A549 (cell line): ENCODE measurements at regions of chr17 and their contacts with region 1.

Region 1: DNA sequence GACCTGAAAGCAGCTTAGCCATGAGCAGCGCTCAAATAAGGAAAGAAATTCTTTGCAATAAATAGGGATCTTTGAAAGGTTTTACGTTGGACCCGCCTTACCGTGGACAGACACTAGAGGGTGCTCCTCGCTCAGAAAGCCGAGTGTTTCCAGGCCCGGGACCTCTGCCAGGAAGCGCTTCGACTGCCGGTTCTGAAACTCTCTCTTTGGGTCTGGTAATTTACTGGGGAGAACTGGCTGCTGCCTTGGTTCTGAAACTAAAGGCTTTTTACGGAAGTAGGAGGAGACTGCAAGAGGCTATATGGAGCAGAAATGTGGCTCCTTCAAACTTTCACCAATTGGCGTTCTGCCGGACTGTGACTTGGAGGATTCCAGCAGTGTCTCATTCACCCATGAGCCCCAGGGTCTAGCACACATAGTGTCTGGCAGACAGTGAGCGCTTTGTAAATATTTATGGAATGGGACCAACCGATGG is 45.6 kb upstream of the HOXB9 start:
- DNase-seq: peak; percentile 72 to 79
- ATAC-seq: peak; percentile 81 to 86
- H3K4me3 ChIP-seq: peak overlapping the region; percentile 10; the same call in 2 of the 3 replicates
- H3K27ac ChIP-seq: peak overlapping the region; percentile 29 to 69
- H3K4me1 ChIP-seq: peaks cover 3% of the 10 kb centered on the region; the same call in 1 of the 3 replicates
- CTCF ChIP-seq: peak; percentile 91
- EP300 ChIP-seq: no peak
- POLR2A ChIP-seq: no peak
- RAD21 ChIP-seq: peak; percentile 90 to 93

Region 2: GRCh38 chr17:48567209-48567608 is 104.5 kb before region 1 on chr17:
- CTCF ChIA-PET with region 1: no interaction called
- POLR2A ChIA-PET with region 1: no interaction called
- DNase-seq: no peak
- ATAC-seq: no peak
- H3K4me3 ChIP-seq: no peak overlapping the region
- H3K27ac ChIP-seq: no peak overlapping the region
- H3K4me1 ChIP-seq: peaks cover 7% of the 10 kb centered on the region; the same call in 1 of the 3 replicates
- CTCF ChIP-seq: no peak
- EP300 ChIP-seq: no peak
- POLR2A ChIP-seq: no peak
- RAD21 ChIP-seq: no peak

Region 3: DNA sequence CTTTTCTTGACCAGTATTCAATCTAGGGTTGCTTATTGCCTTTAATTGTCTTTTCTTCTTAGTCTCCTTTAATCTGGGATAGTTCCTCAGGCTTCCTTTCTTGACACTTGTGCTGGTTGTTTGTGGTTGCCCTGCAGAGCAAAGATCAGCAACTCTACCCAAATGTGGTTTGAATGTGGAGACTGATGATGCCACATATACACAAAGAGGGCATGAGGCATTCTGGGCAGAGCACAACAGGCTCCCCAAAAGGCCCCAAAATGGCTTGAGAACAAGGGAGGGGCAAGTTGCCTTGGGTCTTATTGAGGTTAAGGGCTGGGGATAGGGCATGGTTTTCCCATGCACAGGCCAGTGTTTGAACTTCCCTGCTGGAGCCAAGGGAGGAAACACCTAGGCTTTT is 15.8 kb before region 1 on chr17:
- CTCF ChIA-PET with region 1: interaction called, 46 read pairs
- POLR2A ChIA-PET with region 1: no interaction called
- DNase-seq: no peak
- ATAC-seq: no peak
- H3K4me3 ChIP-seq: no peak overlapping the region
- H3K27ac ChIP-seq: no peak overlapping the region
- H3K4me1 ChIP-seq: no peaks in the 10 kb centered on the region
- CTCF ChIP-seq: no peak
- EP300 ChIP-seq: no peak
- POLR2A ChIP-seq: no peak
- RAD21 ChIP-seq: no peak

Region 4: GRCh38 chr17:48711102-48711501 is 39.4 kb after region 1 on chr17:
- CTCF ChIA-PET with region 1: interaction called, 70 read pairs
- POLR2A ChIA-PET with region 1: no interaction called
- DNase-seq: no peak
- ATAC-seq: peak in 1 of 2 experiments; percentile 39; a peak in 2 of 6 replicates
- H3K4me3 ChIP-seq: no peak overlapping the region
- H3K27ac ChIP-seq: no peak overlapping the region
- H3K4me1 ChIP-seq: peaks cover 13% of the 10 kb centered on the region; the same call in 2 of the 3 replicates
- CTCF ChIP-seq: no peak
- EP300 ChIP-seq: no peak
- POLR2A ChIP-seq: no peak
- RAD21 ChIP-seq: no peak

Region 5: DNA sequence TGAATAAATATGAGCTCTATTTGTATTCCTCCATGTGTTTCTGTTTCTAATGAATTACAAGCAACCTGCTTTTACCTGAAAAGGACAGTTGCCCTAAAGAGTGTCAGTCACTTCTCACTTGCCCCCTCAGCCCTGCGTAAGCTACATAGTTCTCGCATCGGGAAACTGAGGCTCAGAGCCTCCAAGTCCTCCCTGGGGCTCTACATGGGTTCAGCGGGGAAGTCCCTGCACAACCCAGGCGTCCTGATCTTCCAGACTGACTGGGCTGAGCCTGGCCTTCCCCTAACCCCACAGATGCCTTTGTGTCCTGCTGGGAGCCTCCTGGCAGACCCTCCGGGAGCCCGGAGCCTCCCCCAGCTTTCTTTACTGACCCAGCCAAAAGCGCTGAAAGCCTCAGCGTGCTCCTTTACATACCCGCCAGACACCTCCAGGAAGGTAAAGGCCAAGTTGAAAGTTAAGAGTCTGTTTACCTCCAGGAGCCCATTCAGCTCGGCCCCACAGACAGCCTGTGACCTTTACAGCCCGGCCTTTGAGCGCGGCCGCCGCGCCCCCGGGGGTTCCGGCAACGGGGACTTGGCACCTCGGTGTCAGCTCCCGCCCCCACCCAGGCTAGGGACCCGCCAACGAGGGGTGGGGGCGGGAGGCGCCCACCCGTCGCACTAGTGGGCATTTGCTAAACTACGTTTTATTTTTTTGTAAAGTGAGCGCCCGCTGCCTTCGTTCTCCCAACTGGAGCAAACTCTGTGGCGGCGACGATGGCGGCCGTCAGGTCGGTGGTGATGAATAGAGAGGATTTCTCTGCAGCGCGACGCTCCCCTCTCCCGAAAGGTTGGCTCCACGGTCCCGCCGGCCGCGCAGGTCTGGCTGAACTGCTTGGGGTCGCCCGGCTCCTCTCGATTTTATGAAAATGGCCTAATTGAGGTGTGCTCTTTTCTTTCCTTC is 61.2 kb after region 1 on chr17:
- CTCF ChIA-PET with region 1: interaction called, 204 read pairs
- POLR2A ChIA-PET with region 1: no interaction called
- DNase-seq: no peak
- ATAC-seq: no peak
- H3K4me3 ChIP-seq: no peak overlapping the region
- H3K27ac ChIP-seq: no peak overlapping the region
- H3K4me1 ChIP-seq: peaks cover 8% of the 10 kb centered on the region
- CTCF ChIP-seq: no peak
- EP300 ChIP-seq: no peak
- POLR2A ChIP-seq: no peak
- RAD21 ChIP-seq: no peak